Calu3 (cell line): ENCODE measurements at regions of chr4 and their contacts with region 1.

Region 1: GRCh38 chr4:37981844-37982720 is 21.9 kb downstream of the PTTG2 start:
- DNase-seq: peak; percentile 15
- H3K4me3 Mint-ChIP-seq: no peak overlapping the region
- H3K27ac Mint-ChIP-seq: peak overlapping the region; percentile 67
- H3K4me1 Mint-ChIP-seq: peaks cover 23% of the 10 kb centered on the region
- H3K27me3 Mint-ChIP-seq: no peaks in the 10 kb centered on the region
- CTCF ChIP-seq: no peak

Region 2: GRCh38 chr4:37891260-37892159 is 90.6 kb before region 1 on chr4:
- CTCF ChIA-PET with region 1: no interaction called
- intact Hi-C with region 1: loop called (anchors 5 kb)
- DNase-seq: peak; percentile 16
- H3K4me3 Mint-ChIP-seq: peak overlapping the region; percentile 59
- H3K27ac Mint-ChIP-seq: no peak overlapping the region
- H3K4me1 Mint-ChIP-seq: no peaks in the 10 kb centered on the region
- H3K27me3 Mint-ChIP-seq: peaks cover 12% of the 10 kb centered on the region
- CTCF ChIP-seq: no peak

Region 3: GRCh38 chr4:38034986-38035882 is 53.2 kb after region 1 on chr4:
- CTCF ChIA-PET with region 1: no interaction called
- intact Hi-C with region 1: loop called (anchors 5 kb)
- DNase-seq: peak; percentile 55
- H3K4me3 Mint-ChIP-seq: no peak overlapping the region
- H3K27ac Mint-ChIP-seq: no peak overlapping the region
- H3K4me1 Mint-ChIP-seq: no peaks in the 10 kb centered on the region
- H3K27me3 Mint-ChIP-seq: no peaks in the 10 kb centered on the region
- CTCF ChIP-seq: peak; percentile 24